GM12878 (cell line): ENCODE measurements at regions of chr17 and their contacts with region 1.

Region 1: DNA sequence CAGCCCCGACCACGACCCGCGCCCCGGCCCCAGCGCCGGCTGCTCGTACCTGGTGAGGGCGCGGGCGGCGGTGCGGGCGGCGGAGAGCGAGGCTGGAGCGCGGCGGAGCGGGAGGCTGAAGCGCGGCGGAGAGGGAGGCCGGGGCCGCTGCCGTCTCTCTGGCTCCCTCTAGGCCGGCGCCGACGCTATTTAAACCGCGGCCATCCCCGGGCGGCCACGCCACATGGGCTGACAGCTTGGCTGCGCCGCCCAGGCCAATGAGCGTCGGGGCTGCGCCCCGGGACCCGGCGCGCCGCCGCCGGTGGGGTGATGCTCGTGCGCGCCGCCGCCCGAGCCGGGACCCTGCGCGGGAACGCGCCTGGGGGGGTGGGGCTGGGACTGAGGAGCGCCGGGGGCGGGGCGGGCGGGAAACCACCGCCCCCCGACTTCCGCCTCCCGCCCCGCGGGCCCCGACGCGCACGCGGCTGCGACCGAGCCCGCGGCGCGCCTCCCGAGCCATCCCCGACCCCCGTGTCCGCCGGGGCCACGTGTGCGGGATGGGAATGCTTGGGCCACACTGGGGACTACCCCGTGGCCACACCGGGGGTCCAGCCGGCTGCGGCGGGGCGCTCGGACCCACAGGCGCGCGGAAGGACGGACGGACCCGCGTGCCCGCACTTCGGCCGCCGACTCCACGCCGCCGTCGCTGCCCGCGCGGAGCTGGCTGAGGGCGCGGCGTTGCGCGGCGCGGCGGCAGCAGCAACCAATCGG is at the start of gene FASN:
- DNase-seq: peak; percentile 65
- ATAC-seq: peak; percentile 76
- H3K4me3 ChIP-seq: peak within 1 kb of the TSS; percentile 92
- H3K27ac ChIP-seq: peak within 1 kb of the TSS; percentile 93
- H3K4me1 ChIP-seq: peaks cover 17% of the 10 kb centered on the region
- H3K27me3 ChIP-seq: no peaks in the 10 kb centered on the region
- CTCF ChIP-seq: peak; percentile 37 to 70 (median 42); a peak in 5 of 6 replicates
- EP300 ChIP-seq: no peak
- POLR2A ChIP-seq: peak; percentile 94
- RAD21 ChIP-seq: no peak
- polyA plus RNA-seq, gene FASN: 0.19 to 0.31 TPM

Region 2: DNA sequence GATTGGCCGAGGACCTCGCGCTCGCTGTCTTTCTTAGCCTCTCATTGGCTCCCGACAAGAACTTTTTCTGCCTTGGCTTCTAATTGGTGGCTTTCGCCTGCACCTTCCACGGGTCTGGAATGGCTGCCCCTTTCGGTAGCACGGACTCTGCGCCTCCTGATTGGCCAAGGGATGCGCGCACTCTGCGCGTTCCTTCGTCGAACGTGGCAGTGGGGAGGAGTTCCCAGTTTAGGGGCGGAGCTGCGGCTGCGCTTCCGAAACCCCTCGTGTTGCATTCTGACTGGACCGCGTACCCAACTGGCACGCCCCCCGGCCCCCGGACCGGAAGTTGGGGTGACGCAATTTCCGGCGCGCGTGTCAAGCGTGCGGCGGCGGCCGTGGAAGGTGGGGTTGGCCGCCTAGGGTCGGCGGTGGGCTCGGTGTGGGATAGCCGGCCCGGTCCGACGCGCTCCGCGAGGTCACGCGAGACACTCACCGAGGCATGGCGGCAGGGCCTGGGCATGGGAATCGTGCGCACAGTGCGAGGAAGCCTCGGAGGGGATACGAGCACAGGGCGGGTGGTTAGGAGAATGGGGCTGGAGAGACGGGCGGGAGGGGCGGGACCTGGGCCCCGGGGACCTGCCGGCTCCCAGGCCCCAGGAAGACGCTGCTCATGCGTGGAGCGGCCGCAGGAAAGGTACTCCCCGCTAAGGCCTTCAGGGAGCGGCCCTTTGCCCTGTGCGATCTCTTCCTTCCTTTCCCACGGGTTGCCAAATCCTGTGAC is 237.3 kb before region 1 on chr17:
- CTCF ChIA-PET with region 1: no interaction called
- POLR2A ChIA-PET with region 1: interaction called, 4 read pairs
- RAD21 ChIA-PET with region 1: no interaction called
- SMC1A ChIA-PET with region 1: no interaction called
- in situ Hi-C with region 1: no loop called
- intact Hi-C with region 1: loop called (anchors 1 kb)
- DNase-seq: peak; percentile 100
- ATAC-seq: peak; percentile 89
- H3K4me3 ChIP-seq: peak overlapping the region; percentile 94
- H3K27ac ChIP-seq: peak overlapping the region; percentile 98
- H3K4me1 ChIP-seq: peaks cover 23% of the 10 kb centered on the region
- H3K27me3 ChIP-seq: no peaks in the 10 kb centered on the region
- CTCF ChIP-seq: no peak
- EP300 ChIP-seq: 0 out of 4 replicates have a peak, but pooled peaks of 1 of the 2 experiments have one; percentile 42
- POLR2A ChIP-seq: peak; percentile 96
- RAD21 ChIP-seq: no peak

Region 3: DNA sequence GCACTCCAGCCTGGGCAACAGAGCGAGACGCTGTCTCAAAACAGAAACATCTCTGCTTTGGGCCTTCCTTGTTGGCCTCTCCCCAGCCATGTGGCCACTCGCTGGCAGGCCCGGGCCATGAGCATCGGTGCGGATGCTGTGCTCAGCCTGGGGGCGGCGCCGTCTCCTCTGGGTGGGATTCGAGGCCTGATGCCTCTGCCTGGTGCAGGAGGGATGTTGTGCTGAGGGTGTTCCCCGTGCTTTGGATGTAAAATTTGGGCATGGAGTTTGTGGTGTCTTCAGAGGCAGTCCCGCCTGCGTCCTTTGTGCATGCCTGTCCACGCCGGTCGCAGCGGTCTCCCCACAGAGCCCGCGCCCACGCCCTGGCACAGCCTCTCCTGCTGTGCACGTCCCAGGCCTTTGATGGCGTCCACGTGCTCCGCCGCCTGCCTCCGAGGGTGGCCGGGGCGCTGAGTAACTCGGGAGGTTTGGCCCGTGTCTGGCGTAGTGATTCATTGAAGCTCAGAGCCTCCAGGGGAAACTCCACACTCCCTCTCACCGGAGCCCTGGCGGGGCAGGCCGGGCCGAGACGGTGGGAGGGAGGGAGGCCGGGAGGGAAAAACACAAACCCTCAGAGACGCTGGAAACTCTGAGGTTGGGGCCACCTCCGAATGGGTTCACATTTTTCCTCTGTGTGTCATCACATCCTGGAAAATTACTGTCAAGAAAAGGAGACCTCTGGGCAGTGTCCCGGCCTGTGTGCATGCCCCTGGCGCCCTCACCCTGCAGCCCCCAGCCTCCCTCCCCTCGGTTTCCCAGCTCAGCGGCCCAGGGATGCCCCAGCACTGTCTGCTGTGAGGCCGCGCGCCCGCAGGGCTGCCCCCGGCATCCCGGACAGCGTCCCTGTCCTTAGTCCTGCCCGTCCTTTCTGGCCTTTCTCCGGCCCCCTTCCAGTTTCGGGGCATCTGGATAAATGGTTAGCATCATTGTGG is 94.6 kb before region 1 on chr17:
- CTCF ChIA-PET with region 1: no interaction called
- POLR2A ChIA-PET with region 1: no interaction called
- RAD21 ChIA-PET with region 1: no interaction called
- SMC1A ChIA-PET with region 1: no interaction called
- in situ Hi-C with region 1: no loop called
- intact Hi-C with region 1: no loop called
- DNase-seq: no peak
- ATAC-seq: no peak; the same call in 2 of the 3 replicates
- H3K4me3 ChIP-seq: no peak overlapping the region
- H3K27ac ChIP-seq: no peak overlapping the region
- H3K4me1 ChIP-seq: no peaks in the 10 kb centered on the region
- H3K27me3 ChIP-seq: no peaks in the 10 kb centered on the region
- CTCF ChIP-seq: no peak
- EP300 ChIP-seq: no peak
- POLR2A ChIP-seq: no peak
- RAD21 ChIP-seq: no peak

Region 4: GRCh38 chr17:82037113-82037888 is 60.9 kb before region 1 on chr17 and contains the start of gene DCXR:
- CTCF ChIA-PET with region 1: interaction called, 7 read pairs
- POLR2A ChIA-PET with region 1: interaction called, 3 read pairs
- RAD21 ChIA-PET with region 1: interaction called, 5 read pairs
- SMC1A ChIA-PET with region 1: no interaction called
- in situ Hi-C with region 1: no loop called
- intact Hi-C with region 1: loop called (anchors 5 kb)
- DNase-seq: peak; percentile 72
- ATAC-seq: peak; percentile 98
- H3K4me3 ChIP-seq: peak within 1 kb of the TSS; percentile 81
- H3K27ac ChIP-seq: peak within 1 kb of the TSS; percentile 89
- H3K4me1 ChIP-seq: peaks cover 10% of the 10 kb centered on the region
- H3K27me3 ChIP-seq: no peaks in the 10 kb centered on the region
- CTCF ChIP-seq: peak; percentile 83 to 94 (median 89)
- EP300 ChIP-seq: no peak
- POLR2A ChIP-seq: peak; percentile 99
- RAD21 ChIP-seq: no peak
- polyA plus RNA-seq, gene DCXR: 12.3 to 44.8 TPM

Region 5: DNA sequence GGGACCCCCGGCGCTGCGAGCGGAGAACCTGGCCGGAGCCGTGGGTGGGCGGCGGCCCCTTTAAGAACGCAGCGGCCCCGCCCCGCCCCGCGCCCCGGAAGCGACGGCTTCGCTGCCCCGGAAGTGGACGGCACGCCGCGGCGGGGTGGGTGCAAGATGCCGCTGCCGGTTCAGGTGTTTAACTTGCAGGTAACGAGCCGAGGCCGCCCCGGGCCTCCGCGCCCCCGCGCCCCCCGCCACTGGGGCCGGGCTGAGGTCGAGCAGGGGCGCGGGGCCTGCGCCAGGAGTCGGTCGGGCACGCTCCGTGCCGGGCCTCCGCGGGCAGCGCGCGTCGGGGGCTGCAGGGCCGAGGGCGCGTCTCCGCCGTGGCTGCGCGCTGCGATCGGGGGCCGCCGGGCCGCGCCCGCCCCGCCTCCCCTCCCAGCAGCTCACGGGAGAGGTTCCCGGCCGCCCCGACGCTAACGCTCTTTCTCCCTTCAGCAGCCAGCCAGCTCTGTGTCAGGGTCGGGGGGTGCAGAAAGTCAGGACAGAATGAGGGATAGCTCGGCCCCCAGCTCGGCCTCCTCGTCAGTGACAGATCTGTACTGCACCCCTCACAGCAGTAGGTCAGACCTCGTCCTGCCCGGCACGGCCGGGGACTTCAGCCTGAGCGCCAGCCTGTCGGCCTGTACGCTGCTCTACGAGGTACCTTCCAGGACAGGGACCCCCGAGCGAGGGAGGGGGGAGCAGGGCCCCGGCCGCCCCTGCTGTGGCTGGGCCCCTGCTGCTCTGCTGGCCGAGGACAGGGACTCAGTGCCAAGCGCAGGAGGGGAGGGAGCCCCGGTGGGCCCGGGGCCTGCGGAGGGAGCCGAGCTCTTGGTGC is 46.2 kb before region 1 on chr17 and contains the starts of genes GPS1 and RFNG:
- CTCF ChIA-PET with region 1: no interaction called
- POLR2A ChIA-PET with region 1: no interaction called
- RAD21 ChIA-PET with region 1: no interaction called
- SMC1A ChIA-PET with region 1: no interaction called
- in situ Hi-C with region 1: no loop called
- intact Hi-C with region 1: loop called (anchors 5 kb)
- DNase-seq: no peak
- ATAC-seq: peak; percentile 94
- H3K4me3 ChIP-seq: peak within 1 kb of the TSS; percentile 83
- H3K27ac ChIP-seq: peak within 1 kb of the TSS; percentile 52
- H3K4me1 ChIP-seq: peaks cover 4% of the 10 kb centered on the region
- H3K27me3 ChIP-seq: no peaks in the 10 kb centered on the region
- CTCF ChIP-seq: no peak
- EP300 ChIP-seq: no peak
- POLR2A ChIP-seq: peak; percentile 74
- RAD21 ChIP-seq: no peak
- polyA plus RNA-seq, gene GPS1: 2.2 to 11.5 TPM
- polyA plus RNA-seq, gene RFNG: 0.10 to 0.93 TPM

Region 6: DNA sequence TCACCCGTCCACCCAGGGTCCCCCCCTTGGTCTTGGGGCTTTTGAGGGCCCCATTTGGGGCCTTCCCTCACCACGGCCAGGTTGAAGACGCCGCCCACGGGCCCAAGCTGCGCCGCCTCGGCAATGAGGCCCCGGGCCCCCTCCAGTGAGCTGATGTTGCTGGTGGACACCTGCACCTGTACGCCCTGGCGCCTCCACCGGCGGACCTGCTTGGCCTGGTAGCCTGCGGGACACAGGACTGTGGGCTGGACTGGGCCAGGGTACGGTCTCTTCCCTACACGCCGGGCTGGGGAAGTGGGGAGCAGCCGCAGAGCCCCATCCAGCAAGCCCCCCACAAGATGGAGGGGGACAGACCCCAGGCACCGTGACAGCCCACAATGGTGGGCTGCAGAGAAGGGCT is 15.8 kb before region 1 on chr17:
- CTCF ChIA-PET with region 1: no interaction called
- POLR2A ChIA-PET with region 1: no interaction called
- RAD21 ChIA-PET with region 1: no interaction called
- SMC1A ChIA-PET with region 1: no interaction called
- in situ Hi-C with region 1: no loop called
- intact Hi-C with region 1: no loop called
- DNase-seq: no peak
- ATAC-seq: no peak
- H3K4me3 ChIP-seq: no peak overlapping the region
- H3K27ac ChIP-seq: no peak overlapping the region
- H3K4me1 ChIP-seq: no peaks in the 10 kb centered on the region
- H3K27me3 ChIP-seq: no peaks in the 10 kb centered on the region
- CTCF ChIP-seq: no peak
- EP300 ChIP-seq: no peak
- POLR2A ChIP-seq: no peak
- RAD21 ChIP-seq: no peak